Activated T-helper 2 cell treated with anti-CD3 and anti-CD28 coated beads, Interferon-gamma antibody, Interleukin-2, Interleukin-4, amounts not matched to agents 10 μg/mL and 5 μg/mL and 100 μg/mL, durations not matched to agents 14 hours and 24 hours and 36 hours (primary cell): ENCODE measurements at regions of chr18 and their contacts with region 1.

Region 1: GRCh38 chr18:77132371-77133050 is at the start of gene MBP:
- DNase-seq: peak; percentile 55
- H3K4me3 Mint-ChIP-seq: peak within 1 kb of the TSS; percentile 98
- H3K27ac Mint-ChIP-seq: peak within 1 kb of the TSS; percentile 95
- H3K4me1 Mint-ChIP-seq: peaks cover 56% of the 10 kb centered on the region
- H3K27me3 Mint-ChIP-seq: no peaks in the 10 kb centered on the region
- total RNA-seq, gene MBP: 53.7 and 54.3 TPM in 2 replicates

Region 2: GRCh38 chr18:76847916-76848315 is 284.6 kb before region 1 on chr18:
- intact Hi-C with region 1: no loop called
- DNase-seq: no peak
- H3K4me3 Mint-ChIP-seq: no peak overlapping the region
- H3K27ac Mint-ChIP-seq: no peak overlapping the region
- H3K4me1 Mint-ChIP-seq: peaks cover 23% of the 10 kb centered on the region
- H3K27me3 Mint-ChIP-seq: no peaks in the 10 kb centered on the region

Region 3: DNA sequence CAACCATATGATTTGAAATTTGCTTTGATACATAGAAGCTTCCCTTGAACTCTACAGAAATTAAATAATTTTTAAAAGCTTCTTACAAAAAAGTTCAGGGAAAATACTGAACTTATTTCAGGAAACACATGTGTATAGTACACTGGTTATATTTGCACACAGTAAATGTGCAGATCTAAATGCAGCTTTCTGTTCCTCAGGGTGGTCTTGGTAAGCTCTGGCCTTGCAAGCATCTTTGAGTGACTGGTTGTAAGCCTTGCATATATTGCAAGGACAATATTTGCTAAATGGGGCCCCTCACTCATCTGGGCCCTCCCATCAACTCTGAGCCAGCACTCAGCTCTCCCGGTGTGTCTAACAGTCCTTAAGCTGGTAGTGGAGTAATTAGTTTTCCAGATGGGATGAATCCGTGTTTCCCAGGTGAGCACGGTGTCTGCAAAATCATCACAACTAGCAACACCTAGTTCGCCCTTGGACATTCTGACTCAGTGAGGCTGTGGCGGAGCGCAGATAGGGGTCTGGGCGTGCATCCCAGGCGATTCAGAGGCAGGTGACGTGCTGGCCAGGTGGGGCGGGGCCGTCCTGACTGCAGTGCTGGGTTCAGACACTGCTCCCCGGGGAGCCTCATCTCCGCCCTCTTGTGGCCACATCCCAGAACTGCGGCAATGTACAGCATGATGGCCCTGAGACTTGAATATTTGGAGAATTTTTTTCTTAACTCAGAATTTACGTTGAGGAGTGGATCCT is 149.5 kb before region 1 on chr18:
- intact Hi-C with region 1: no loop called
- DNase-seq: peak; percentile 80
- H3K4me3 Mint-ChIP-seq: no peak overlapping the region
- H3K27ac Mint-ChIP-seq: no peak overlapping the region
- H3K4me1 Mint-ChIP-seq: peaks cover 4% of the 10 kb centered on the region
- H3K27me3 Mint-ChIP-seq: no peaks in the 10 kb centered on the region

Region 4: DNA sequence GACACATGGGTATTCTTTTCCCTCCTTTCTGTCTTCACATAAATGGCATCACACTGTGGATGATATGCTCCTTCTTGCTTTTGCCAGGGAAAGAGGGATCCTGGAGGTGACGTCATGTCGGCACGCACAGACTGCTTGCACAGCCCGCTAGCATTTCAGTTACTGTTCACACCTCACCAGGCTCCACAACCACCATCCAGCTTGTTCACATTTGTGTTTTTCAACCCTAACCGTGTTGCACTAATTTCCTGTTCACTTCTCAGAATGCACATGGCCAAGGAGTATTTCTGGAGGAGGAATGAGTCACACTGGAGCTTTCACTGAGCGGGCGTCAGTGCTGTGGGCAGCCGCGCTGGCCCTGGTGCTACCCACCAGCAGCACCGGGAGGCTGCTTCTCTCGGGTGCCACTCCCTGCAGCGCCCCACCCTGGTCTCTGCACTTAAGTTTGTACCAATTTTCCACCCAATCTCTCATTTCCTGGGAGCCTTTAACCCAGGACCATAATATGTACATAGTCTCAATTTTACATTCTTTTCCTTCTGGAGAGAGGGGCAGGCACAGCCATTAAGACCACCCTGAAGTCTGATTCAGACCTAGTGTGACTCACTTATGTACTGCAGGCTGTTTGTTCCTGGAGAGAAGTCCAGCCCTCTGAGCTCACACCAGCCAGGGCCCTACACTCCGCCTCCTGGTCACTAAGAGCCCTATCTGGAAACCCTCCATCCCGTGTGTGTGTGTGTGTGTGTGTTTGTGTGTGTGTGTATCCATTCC is 65.0 kb before region 1 on chr18:
- intact Hi-C with region 1: no loop called
- DNase-seq: peak; percentile 68
- H3K4me3 Mint-ChIP-seq: peak overlapping the region; percentile 63
- H3K27ac Mint-ChIP-seq: peak overlapping the region; percentile 94
- H3K4me1 Mint-ChIP-seq: peaks cover 97% of the 10 kb centered on the region
- H3K27me3 Mint-ChIP-seq: no peaks in the 10 kb centered on the region

Region 5: DNA sequence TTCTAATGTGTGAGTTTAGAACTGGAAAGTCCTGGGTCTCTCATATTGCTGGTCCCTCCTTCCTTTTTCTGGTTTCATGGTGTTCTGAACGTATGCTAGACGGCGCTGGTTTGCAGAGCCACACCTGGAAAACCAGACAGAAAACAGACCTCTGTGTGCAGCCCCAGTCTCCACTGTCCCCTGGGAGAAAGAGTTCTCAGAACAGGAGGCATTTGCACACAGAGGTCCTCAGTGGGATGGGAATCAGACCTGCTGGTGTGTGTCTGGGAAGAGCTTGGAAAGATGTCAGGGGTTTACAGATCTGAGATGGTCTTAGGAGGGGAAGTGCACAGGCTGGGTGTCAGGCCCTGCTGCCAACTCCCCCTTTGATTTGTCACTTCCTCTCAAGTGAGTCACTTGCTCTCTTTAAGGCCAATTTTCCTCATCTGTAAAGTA is 14.9 kb after region 1 on chr18:
- intact Hi-C with region 1: loop called (anchors 2 kb)
- DNase-seq: no peak
- H3K4me3 Mint-ChIP-seq: no peak overlapping the region
- H3K27ac Mint-ChIP-seq: peak overlapping the region; percentile 62
- H3K4me1 Mint-ChIP-seq: peaks cover 35% of the 10 kb centered on the region
- H3K27me3 Mint-ChIP-seq: peaks cover 2% of the 10 kb centered on the region

Region 6: DNA sequence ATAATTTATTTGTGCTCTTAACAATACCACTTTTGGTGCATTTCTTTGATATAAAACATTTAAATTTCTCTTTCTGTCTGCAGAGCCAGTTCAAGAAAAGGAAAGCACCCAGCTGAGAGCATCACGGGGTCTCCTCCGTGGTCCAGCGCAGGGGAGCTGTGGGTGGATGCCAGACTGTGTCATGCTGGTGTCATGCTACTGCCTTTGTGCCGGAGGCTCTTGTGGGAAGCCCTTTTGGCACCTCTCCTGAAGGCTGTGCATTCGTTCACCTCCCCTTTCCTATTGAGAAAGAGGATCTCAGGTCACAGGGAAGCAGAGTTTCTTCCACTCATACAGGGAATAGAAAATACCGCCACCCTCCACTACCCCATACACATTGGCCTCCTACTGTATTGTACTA is 567.5 kb after region 1 on chr18:
- intact Hi-C with region 1: no loop called
- DNase-seq: no peak
- H3K4me3 Mint-ChIP-seq: no peak overlapping the region
- H3K27ac Mint-ChIP-seq: no peak overlapping the region
- H3K4me1 Mint-ChIP-seq: no peaks in the 10 kb centered on the region
- H3K27me3 Mint-ChIP-seq: peaks cover 1% of the 10 kb centered on the region